Calu3 (cell line): ENCODE measurements at regions of chr17 and their contacts with region 1.

Region 1: DNA sequence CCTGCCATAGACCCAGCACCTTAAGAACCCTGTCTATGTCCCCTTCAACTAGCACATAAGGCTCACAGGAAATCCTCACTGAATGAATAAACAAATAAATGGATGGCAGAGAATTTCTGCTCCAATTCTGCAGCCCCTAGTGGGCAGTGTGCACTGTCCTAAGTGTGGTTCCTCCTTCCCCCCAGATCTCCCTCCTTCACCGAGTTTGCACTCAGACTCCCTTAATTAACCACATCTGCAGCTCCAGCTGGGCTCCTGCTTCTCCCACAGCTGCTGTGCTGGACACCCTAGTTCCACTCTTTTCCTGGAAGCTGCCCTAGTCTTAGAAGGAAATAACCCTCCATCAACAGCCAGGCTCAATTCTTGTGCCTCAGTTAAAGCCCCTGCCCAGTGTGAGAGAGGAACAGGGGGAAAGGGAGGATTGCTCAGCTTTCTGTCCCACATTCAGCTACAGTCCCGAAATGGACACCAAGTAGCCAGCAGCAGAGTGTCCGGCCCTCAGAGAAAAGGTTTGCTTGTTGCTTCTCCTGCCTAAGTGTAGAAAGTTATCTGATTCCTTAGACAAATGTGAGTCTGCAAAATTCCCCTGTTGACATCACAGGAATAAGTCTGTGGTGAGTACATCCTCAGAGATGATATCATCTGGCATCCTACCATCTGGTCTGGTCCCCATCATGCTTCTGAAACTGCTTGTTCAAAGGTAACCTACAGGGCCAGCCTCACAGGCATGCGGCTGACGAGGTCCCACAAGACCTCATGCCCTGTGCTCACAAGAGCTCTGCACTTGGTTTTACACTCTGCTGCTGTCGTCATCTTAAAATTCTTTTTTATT is 12.3 kb downstream of the LRRC3C start:
- DNase-seq: peak; percentile 76
- H3K4me3 Mint-ChIP-seq: no peak overlapping the region
- H3K27ac Mint-ChIP-seq: no peak overlapping the region
- H3K4me1 Mint-ChIP-seq: peaks cover 12% of the 10 kb centered on the region
- H3K27me3 Mint-ChIP-seq: peaks cover 63% of the 10 kb centered on the region
- CTCF ChIP-seq: no peak

Region 2: GRCh38 chr17:38752119-38752929 is 1187.5 kb before region 1 on chr17 and contains the start of gene PSMB3:
- CTCF ChIA-PET with region 1: interaction called, 11 read pairs
- intact Hi-C with region 1: no loop called
- DNase-seq: peak; percentile 100
- H3K4me3 Mint-ChIP-seq: peak within 1 kb of the TSS; percentile 78
- H3K27ac Mint-ChIP-seq: peak within 1 kb of the TSS; percentile 85
- H3K4me1 Mint-ChIP-seq: peaks cover 28% of the 10 kb centered on the region
- H3K27me3 Mint-ChIP-seq: no peaks in the 10 kb centered on the region
- CTCF ChIP-seq: no peak
- total RNA-seq, gene PSMB3: 893 and 935 TPM in 2 replicates

Region 3: DNA sequence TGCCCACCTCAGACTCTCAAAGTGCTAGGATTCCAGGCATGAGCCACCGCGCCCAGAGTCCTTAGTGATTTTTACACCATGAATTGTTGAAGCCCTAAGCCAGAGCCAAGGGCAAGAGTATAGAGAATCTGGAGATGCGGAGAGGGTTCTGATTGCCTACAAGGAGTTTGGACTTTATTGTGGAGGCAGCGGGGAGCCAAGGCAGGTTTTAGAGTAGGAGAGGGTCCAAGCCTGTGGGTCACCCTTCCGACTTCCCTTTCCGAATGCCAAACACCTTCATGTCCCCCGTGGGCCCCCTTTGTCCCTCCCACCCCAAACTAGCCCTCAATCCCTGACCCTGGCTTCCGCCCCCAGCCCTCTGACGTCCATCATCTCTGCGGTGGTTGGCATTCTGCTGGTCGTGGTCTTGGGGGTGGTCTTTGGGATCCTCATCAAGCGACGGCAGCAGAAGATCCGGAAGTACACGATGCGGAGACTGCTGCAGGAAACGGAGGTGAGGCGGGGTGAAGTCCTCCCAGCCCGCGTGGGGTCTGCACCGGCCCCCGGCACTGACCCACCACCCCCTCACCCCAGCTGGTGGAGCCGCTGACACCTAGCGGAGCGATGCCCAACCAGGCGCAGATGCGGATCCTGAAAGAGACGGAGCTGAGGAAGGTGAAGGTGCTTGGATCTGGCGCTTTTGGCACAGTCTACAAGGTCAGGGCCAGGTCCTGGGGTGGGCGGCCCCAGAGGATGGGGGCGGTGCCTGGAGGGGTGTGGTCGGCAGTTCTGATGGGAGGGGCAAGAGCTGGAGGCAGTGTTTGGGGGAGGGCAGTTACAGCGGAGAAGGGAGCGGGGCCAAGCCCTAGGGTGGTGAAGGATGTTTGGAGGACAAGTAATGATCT is 216.6 kb before region 1 on chr17:
- CTCF ChIA-PET with region 1: interaction called, 1,335 read pairs
- intact Hi-C with region 1: no loop called
- DNase-seq: peak; percentile 75
- H3K4me3 Mint-ChIP-seq: peak overlapping the region; percentile 0
- H3K27ac Mint-ChIP-seq: peak overlapping the region; percentile 28
- H3K4me1 Mint-ChIP-seq: peaks cover 38% of the 10 kb centered on the region
- H3K27me3 Mint-ChIP-seq: no peaks in the 10 kb centered on the region
- CTCF ChIP-seq: no peak

Region 4: GRCh38 chr17:39744836-39745672 is 194.8 kb before region 1 on chr17:
- CTCF ChIA-PET with region 1: interaction called, 1,070 read pairs
- intact Hi-C with region 1: no loop called
- DNase-seq: no peak
- H3K4me3 Mint-ChIP-seq: no peak overlapping the region
- H3K27ac Mint-ChIP-seq: no peak overlapping the region
- H3K4me1 Mint-ChIP-seq: peaks cover 32% of the 10 kb centered on the region
- H3K27me3 Mint-ChIP-seq: no peaks in the 10 kb centered on the region
- CTCF ChIP-seq: no peak

Region 5: GRCh38 chr17:39763046-39763820 is 176.6 kb before region 1 on chr17:
- CTCF ChIA-PET with region 1: interaction called, 1,070 read pairs
- intact Hi-C with region 1: no loop called
- DNase-seq: no peak
- H3K4me3 Mint-ChIP-seq: no peak overlapping the region
- H3K27ac Mint-ChIP-seq: no peak overlapping the region
- H3K4me1 Mint-ChIP-seq: peaks cover 12% of the 10 kb centered on the region
- H3K27me3 Mint-ChIP-seq: peaks cover 26% of the 10 kb centered on the region
- CTCF ChIP-seq: no peak

Region 6: DNA sequence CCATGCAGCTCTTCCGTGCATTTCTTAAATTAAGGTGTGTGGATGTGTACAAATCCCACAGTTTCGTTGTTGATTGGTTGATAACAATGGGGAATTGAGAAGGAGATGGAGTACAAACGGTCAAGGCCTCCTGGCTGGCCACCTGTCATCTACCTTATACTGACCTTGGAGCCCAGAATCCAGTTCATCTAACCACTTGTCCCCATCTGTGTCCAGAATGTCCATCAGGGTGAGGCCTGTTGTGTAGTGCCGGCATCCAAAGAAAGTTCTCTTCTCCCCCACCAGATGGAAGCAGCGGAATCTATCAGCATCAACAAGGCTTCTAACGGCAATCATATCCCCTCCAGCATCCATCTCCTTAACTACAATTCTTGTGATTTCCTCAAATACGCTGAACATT is 22.9 kb before region 1 on chr17:
- CTCF ChIA-PET with region 1: interaction called, 6,506 read pairs
- intact Hi-C with region 1: loop called (anchors 1 kb)
- DNase-seq: peak; percentile 94
- H3K4me3 Mint-ChIP-seq: no peak overlapping the region
- H3K27ac Mint-ChIP-seq: no peak overlapping the region
- H3K4me1 Mint-ChIP-seq: peaks cover 24% of the 10 kb centered on the region
- H3K27me3 Mint-ChIP-seq: no peaks in the 10 kb centered on the region
- CTCF ChIP-seq: no peak

Region 7: DNA sequence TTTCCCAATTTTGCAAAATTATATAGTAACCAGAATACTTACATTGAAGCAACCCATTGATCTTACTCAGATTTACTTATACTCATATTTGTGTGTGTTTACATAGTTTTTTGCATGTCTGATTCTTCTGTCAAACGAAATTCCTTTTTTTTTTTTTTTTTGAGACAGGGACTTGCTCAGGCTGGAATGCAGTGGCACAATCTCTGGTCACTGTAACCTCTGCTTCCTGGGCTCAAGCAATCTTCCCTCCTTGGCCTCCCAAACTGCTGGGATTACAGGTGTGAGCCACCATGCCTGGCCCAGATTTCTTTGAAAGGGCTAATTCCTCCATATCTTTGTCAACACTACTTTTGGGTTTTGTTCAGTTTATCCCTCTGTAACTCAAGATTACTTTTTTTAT is 447.9 kb after region 1 on chr17:
- CTCF ChIA-PET with region 1: no interaction called
- intact Hi-C with region 1: no loop called
- DNase-seq: no peak
- H3K4me3 Mint-ChIP-seq: no peak overlapping the region
- H3K27ac Mint-ChIP-seq: no peak overlapping the region
- H3K4me1 Mint-ChIP-seq: no peaks in the 10 kb centered on the region
- H3K27me3 Mint-ChIP-seq: no peaks in the 10 kb centered on the region
- CTCF ChIP-seq: no peak